ENCODE measurements at regions of chr3 and their contacts with region 1.

Region 1: DNA sequence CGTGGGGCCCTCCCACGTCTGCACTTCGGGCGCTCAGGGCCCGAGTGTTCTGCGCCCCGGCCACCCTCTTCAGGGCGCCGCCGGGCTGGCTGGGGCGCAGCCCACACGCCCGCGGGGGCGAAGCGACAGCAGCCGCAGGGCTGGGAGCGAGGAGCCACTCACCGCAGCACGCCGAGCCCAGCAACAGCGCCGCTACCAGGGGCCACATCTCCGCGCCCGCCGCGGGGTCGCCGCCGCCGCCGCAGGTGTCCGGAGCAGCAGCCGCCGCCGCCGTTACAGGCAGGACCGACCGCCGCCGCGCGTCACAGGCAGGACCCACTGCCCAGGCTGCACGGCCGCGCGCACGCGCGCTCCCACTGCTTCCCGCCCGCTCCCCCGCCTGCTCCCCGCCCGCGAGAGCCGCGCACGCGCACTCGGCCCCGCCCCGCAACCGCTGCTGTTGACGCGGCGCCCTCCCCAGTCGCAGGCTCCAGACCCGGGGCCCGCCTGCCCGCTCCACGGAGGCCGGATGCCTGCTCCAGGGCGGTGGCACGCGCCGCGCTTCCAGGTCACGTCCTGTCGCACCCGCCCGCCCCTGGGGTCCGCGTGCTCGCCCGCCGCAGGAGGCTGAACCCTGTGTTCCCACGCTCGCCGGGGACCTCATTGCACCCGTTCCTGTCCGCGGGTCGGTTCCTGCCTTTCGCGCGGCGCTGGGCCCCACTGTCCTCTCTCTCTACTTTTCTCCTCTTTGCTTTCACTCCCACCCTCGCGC is at the start of gene CD47:
- DNase-seq: peak; percentile 95
- H3K4me3 Mint-ChIP-seq: peak within 1 kb of the TSS; percentile 99
- H3K27ac Mint-ChIP-seq: peak within 1 kb of the TSS; percentile 100
- H3K4me1 Mint-ChIP-seq: peaks cover 29% of the 10 kb centered on the region
- H3K27me3 Mint-ChIP-seq: peaks cover 2% of the 10 kb centered on the region
- total RNA-seq, gene CD47: 145 and 146 TPM in 2 replicates

Region 2: DNA sequence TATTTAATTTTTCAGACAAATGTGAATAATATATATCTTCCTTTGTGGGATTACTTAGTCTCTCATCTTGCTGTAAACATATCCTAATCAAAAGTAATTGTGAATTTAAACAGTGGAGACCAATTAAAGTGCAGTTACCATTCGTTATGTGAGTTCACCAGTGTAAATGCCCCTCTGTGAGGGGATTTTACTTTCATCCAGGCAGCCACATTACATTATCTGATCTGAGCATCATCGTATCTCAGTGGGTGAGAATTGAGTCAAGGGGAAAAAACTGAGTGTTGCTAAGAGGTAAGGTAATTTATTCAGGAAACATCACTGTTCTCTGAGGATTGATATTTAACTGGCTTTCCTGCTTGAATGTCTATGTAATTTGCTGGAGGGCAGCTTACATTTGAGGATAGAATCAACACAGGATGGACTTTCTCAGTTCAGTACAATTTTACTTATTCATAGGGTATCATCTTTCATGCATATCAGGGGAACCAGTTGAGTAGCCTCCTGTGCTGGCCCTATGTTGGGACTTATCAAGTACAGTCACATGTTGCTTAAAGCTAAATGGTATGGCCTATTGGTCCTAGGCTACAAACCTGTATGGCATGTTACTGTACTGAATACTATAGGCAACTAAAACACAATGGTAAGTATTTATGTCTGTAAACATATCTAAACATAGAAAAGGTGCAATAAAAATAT is 219.8 kb before region 1 on chr3:
- intact Hi-C with region 1: loop called (anchors 2 kb)
- DNase-seq: no peak
- H3K4me3 Mint-ChIP-seq: no peak overlapping the region
- H3K27ac Mint-ChIP-seq: no peak overlapping the region
- H3K4me1 Mint-ChIP-seq: peaks cover 11% of the 10 kb centered on the region
- H3K27me3 Mint-ChIP-seq: peaks cover 4% of the 10 kb centered on the region

Region 3: DNA sequence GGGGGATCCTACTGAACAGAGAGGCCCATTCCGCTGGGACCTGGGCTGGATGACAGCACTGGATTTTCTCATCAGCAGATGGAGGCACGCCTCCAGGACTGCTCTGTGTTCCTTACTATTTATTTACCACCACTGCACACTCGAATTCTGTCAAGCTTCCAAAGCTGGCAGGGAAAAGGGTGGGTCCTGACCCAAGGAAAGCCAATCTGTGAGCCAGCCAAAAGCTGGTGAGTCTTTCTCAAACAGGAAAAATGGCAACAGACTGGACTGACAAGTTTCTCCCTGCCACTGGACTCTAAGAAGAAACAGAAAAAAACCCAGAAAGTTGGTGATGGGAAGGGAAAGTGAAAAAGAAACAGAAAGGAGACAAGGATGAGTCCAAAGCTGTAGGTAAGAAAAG is 37.8 kb before region 1 on chr3:
- intact Hi-C with region 1: no loop called
- DNase-seq: no peak
- H3K4me3 Mint-ChIP-seq: no peak overlapping the region
- H3K27ac Mint-ChIP-seq: no peak overlapping the region
- H3K4me1 Mint-ChIP-seq: peaks cover 16% of the 10 kb centered on the region
- H3K27me3 Mint-ChIP-seq: no peaks in the 10 kb centered on the region

Region 4: GRCh38 chr3:108064293-108064887 is 26.5 kb before region 1 on chr3:
- intact Hi-C with region 1: loop called (anchors 2 kb)
- DNase-seq: no peak
- H3K4me3 Mint-ChIP-seq: no peak overlapping the region
- H3K27ac Mint-ChIP-seq: peak overlapping the region; percentile 2
- H3K4me1 Mint-ChIP-seq: peaks cover 39% of the 10 kb centered on the region
- H3K27me3 Mint-ChIP-seq: no peaks in the 10 kb centered on the region

Region 5: GRCh38 chr3:108124337-108125152 is 33.7 kb after region 1 on chr3:
- intact Hi-C with region 1: loop called (anchors 1 kb)
- DNase-seq: peak; percentile 68
- H3K4me3 Mint-ChIP-seq: peak overlapping the region; percentile 96
- H3K27ac Mint-ChIP-seq: peak overlapping the region; percentile 99
- H3K4me1 Mint-ChIP-seq: peaks cover 66% of the 10 kb centered on the region
- H3K27me3 Mint-ChIP-seq: no peaks in the 10 kb centered on the region

Region 6: DNA sequence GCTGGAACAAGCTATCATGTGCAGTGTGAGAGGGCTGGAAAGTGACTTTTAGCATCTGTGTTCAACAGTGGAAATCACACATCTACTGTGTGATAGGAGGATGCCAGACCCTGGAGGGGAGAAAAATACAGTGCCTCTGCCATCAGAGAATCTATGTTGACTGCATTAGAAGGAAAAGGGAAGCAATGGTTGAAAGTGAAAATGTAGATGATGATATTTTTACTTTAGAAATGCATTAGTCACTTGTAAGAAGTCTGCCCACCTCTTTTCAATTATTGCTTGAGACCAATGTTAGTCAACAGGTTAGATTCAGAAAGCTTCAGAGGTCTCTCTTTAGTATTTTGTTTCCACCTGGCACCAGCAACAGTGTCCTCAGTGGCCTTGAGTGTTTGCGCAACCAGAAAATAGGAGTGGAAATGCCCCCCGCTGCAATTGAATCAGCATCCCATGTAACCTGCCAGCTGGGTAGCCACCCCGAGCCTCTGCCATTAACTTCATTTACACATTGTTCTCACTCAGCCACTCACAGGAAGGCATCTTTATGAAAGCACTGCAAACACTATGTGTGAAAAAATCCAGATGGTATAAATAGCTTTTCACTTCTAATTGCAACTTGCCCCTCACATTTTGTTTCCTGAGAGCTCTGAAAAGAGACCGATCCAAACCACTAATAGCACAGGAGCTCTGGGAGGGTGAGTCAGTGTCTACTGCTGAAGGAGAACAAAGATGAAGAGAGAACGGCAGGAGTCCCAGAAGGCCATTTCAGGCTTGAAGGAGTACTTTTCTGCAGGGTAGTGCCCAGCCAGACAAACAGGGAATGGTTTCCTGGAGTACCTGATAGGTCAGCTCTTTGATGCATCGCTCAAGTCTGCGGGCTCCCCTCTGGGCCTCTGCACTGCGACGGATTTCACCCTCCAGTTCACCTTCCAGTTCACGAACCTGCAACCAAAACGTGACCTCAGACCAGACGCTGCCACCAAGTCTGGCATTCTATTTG is 297.6 kb after region 1 on chr3:
- intact Hi-C with region 1: loop called (anchors 2 kb)
- DNase-seq: no peak
- H3K4me3 Mint-ChIP-seq: no peak overlapping the region
- H3K27ac Mint-ChIP-seq: peak overlapping the region; percentile 67
- H3K4me1 Mint-ChIP-seq: peaks cover 23% of the 10 kb centered on the region
- H3K27me3 Mint-ChIP-seq: peaks cover 19% of the 10 kb centered on the region

Measured in activated T-helper 2 cell treated with anti-CD3 and anti-CD28 coated beads, Interferon-gamma antibody, Interleukin-2, Interleukin-4, amounts not matched to agents 10 μg/mL and 5 μg/mL and 100 μg/mL, durations not matched to agents 14 hours and 24 hours and 36 hours (primary cell).